H1 (cell line): ENCODE measurements at regions of chr17 and their contacts with region 1.

Region 1: DNA sequence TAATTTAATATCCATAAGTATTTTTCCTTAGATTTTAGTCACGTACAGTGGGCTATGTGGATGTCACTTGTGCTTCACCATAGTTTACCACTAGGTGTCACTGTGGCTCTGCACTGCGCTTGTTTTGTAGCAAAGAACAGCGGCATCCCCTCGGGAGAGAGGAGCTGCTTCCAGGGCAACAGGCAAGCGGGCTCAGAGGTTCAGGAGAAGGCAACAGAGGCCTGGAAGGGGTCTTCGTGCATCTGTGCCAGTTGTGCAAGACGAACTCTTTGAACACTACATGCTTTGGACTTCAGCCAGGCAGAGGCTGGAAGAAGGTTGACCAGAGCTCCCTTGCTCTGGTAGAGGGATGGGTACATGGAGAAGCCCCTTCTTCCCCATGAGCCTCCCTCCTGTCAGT is 20.6 kb downstream of the CYB561 start:
- DNase-seq: peak in 1 of 2 experiments; percentile 81
- H3K4me3 ChIP-seq: no peak overlapping the region
- H3K27ac ChIP-seq: no peak overlapping the region
- H3K4me1 ChIP-seq: peaks cover 2 to 8% (median 4%) of the 10 kb centered on the region in 4 experiments; a peak in 6 of 7 replicates
- H3K27me3 ChIP-seq: no peaks in the 10 kb centered on the region
- CTCF ChIP-seq: peak; percentile 60 to 91 (median 86)
- EP300 ChIP-seq: no peak
- POLR2A ChIP-seq: no peak
- RAD21 ChIP-seq: peak; percentile 98 to 99

Region 2: DNA sequence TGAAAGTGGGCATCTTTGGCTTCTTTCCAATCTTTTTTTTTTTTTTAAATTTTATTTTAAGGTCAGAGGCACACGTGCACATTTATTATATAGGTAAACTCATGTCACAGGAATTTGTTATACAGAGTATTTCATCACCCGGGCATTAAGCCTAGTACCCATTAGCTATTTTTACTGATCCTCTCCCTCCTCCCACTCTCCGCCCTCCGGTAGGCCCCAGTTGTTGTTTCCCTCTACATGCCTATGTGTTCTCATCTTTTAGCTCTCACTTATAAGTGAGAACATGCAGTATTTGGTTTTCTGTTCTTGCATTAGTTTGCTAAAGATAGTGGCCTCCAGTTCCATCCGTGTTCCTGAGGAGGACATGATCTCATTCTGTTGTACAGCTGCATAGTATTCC is 87.9 kb before region 1 on chr17:
- CTCF ChIA-PET with region 1: no interaction called
- POLR2A ChIA-PET with region 1: no interaction called
- DNase-seq: no peak
- H3K4me3 ChIP-seq: no peak overlapping the region
- H3K27ac ChIP-seq: no peak overlapping the region
- H3K4me1 ChIP-seq: no peaks in the 10 kb centered on the region
- H3K27me3 ChIP-seq: no peaks in the 10 kb centered on the region
- CTCF ChIP-seq: no peak
- EP300 ChIP-seq: no peak
- POLR2A ChIP-seq: no peak
- RAD21 ChIP-seq: no peak

Region 3: GRCh38 chr17:63406689-63407330 is 18.7 kb before region 1 on chr17:
- CTCF ChIA-PET with region 1: interaction called, 48 read pairs
- POLR2A ChIA-PET with region 1: no interaction called
- DNase-seq: peak; percentile 15 to 67
- H3K4me3 ChIP-seq: no peak overlapping the region
- H3K27ac ChIP-seq: no peak overlapping the region
- H3K4me1 ChIP-seq: no peaks in the 10 kb centered on the region
- H3K27me3 ChIP-seq: no peaks in the 10 kb centered on the region
- CTCF ChIP-seq: peak in 2 of 3 experiments; percentile 85 to 91; a peak in 3 of 4 replicates
- EP300 ChIP-seq: no peak
- POLR2A ChIP-seq: no peak
- RAD21 ChIP-seq: peak; percentile 90 to 93

Region 4: DNA sequence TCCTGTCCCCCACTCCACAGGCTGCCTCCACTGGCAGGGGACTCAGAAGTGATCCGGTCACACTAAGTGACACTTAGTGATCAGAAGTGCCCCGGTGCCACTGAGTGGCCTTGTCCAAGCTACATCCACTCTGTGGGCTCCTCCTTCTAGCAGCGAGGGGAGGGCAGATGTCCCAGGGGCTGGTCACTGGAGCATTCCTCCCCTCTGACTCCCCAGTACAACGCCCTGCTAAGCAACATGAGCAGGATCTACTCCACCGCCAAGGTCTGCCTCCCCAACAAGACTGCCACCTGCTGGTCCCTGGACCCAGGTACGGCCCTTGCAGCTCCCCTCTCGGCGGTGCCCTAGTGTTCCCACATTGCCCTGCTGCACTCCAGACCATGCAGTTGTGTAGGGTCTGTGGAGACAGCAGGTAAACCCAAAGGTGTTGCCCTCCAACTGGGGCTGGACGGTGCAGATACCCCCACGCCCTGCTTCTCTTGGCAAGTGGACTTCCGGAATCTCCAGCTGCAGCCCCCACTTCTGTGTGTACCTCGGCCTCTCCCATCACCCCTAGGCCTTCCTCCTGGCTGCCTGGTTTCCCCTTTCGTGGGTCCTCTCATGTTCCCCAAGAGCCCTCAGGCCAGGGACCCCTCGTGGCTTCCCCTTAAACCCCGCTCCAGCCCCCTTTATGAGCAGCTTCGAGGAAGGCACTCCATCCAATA is 53.5 kb after region 1 on chr17:
- CTCF ChIA-PET with region 1: interaction called, 758 read pairs
- POLR2A ChIA-PET with region 1: interaction called, 10 read pairs
- DNase-seq: peak; percentile 65 to 91
- H3K4me3 ChIP-seq: no peak overlapping the region
- H3K27ac ChIP-seq: no peak overlapping the region
- H3K4me1 ChIP-seq: peaks cover 0 to 22% (median 17%) of the 10 kb centered on the region in 4 experiments; a peak in 6 of 7 replicates
- H3K27me3 ChIP-seq: peaks cover 0 to 27% (median 18%) of the 10 kb centered on the region in 4 experiments; a peak in 5 of 7 replicates
- CTCF ChIP-seq: peak; percentile 96 to 99 (median 98)
- EP300 ChIP-seq: no peak
- POLR2A ChIP-seq: no peak
- RAD21 ChIP-seq: peak; percentile 79 to 88

Region 5: GRCh38 chr17:63514974-63515373 is 89.5 kb after region 1 on chr17:
- CTCF ChIA-PET with region 1: interaction called, 13 read pairs
- POLR2A ChIA-PET with region 1: no interaction called
- DNase-seq: no peak
- H3K4me3 ChIP-seq: no peak overlapping the region
- H3K27ac ChIP-seq: no peak overlapping the region
- H3K4me1 ChIP-seq: no peaks in the 10 kb centered on the region; a peak in 1 of 7 replicates
- H3K27me3 ChIP-seq: no peaks in the 10 kb centered on the region
- CTCF ChIP-seq: no peak
- EP300 ChIP-seq: no peak
- POLR2A ChIP-seq: no peak
- RAD21 ChIP-seq: no peak

Region 6: DNA sequence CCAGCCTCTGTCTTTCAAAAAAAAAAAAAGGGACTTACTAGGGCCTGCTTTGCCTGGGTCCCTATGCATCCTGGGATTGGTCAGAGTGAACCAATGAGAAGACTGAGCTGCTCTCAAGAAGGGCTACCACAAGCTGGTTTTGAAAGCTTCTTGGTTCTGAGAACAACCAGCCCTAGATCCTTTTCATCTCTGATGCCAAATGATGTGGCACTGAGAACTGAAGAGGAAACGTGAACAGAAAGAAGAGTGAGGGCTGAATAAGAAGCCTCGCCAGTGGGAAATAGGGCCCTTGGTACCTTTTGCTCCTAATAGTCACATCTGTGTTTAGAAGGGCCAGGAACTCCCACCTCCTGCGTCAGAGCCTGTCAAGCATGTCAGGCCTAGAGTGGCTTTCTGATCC is 185.9 kb after region 1 on chr17:
- CTCF ChIA-PET with region 1: interaction called, 64 read pairs
- POLR2A ChIA-PET with region 1: no interaction called
- DNase-seq: no peak
- H3K4me3 ChIP-seq: no peak overlapping the region
- H3K27ac ChIP-seq: no peak overlapping the region
- H3K4me1 ChIP-seq: no peaks in the 10 kb centered on the region
- H3K27me3 ChIP-seq: no peaks in the 10 kb centered on the region
- CTCF ChIP-seq: no peak
- EP300 ChIP-seq: no peak
- POLR2A ChIP-seq: no peak
- RAD21 ChIP-seq: no peak

Region 7: GRCh38 chr17:63697341-63698286 is 272.1 kb after region 1 on chr17:
- CTCF ChIA-PET with region 1: interaction called, 13 read pairs
- POLR2A ChIA-PET with region 1: no interaction called
- DNase-seq: peak in 1 of 2 experiments; percentile 82
- H3K4me3 ChIP-seq: peak overlapping the region in 1 of 4 experiments; percentile 83; a peak in 2 of 8 replicates
- H3K27ac ChIP-seq: no peak overlapping the region
- H3K4me1 ChIP-seq: peaks cover 3 to 25% (median 17%) of the 10 kb centered on the region in 4 experiments; a peak in 6 of 7 replicates
- H3K27me3 ChIP-seq: peaks cover 0 to 5% (median 0%) of the 10 kb centered on the region in 4 experiments; a peak in 3 of 7 replicates
- CTCF ChIP-seq: peak; percentile 76 to 82 (median 76)
- EP300 ChIP-seq: no peak
- POLR2A ChIP-seq: no peak; a peak in 2 of 3 replicates
- RAD21 ChIP-seq: peak; percentile 43 to 47